CD14-positive monocyte (primary cell): ENCODE measurements at regions of chr19 and their contacts with region 1.

Region 1: DNA sequence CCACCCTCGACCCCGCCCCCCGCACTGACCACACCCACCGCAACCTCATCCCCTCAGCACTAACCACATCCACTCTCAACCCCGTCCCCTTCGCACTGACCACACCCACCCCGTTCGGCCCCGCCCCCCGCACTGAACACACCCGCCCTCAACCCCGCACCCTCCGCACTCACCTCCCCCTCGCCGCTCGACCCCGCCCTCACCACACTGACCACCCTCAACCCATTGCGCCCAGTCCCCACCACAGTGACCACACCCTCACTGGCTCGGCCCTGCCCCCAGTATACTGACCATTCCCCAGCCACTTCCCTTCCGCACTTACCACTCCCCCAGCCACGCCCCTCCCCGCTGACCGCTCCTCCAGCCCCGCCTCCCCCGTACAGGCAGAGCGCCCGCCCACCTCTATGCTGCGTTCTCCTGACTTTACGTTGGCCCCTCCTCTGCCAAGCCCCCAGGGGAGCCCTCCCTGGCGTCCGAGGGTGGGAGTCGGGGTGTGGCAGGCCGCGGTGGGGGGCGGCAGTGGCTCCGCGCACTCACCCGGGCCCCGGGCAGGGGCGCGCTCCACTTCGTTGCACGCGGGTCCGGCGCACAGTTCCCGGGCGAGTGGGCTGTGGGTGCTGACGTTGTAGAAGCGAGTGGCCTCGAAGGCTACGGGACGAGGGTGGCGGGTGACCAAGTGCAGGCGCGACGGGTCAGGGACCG is 8.5 kb downstream of the F2RL3 start:
- DNase-seq: peak; percentile 91 to 97 (median 97)
- H3K4me3 ChIP-seq: peak overlapping the region; percentile 36 to 76 (median 56)
- H3K4me3 Mint-ChIP-seq: peak overlapping the region; percentile 66 to 71
- H3K27ac ChIP-seq: peak overlapping the region; percentile 46 to 79
- H3K27ac Mint-ChIP-seq: peak overlapping the region in 6 of 7 donors; percentile 68 to 97 (median 84)
- H3K4me1 ChIP-seq: peaks cover 64 to 68% of the 10 kb centered on the region in 2 donors
- H3K4me1 Mint-ChIP-seq: peaks cover 52% of the 10 kb centered on the region
- H3K27me3 ChIP-seq: peaks cover 0 to 32% of the 10 kb centered on the region in 2 donors
- H3K27me3 Mint-ChIP-seq: peaks cover 28 to 53% (median 46%) of the 10 kb centered on the region in 3 donors
- CTCF ChIP-seq: no peak

Region 2: GRCh38 chr19:16829010-16829821 is 68.1 kb before region 1 on chr19 and contains the start of gene SIN3B:
- intact Hi-C with region 1: loop called (anchors 5 kb)
- DNase-seq: peak; percentile 87 to 91 (median 89)
- H3K4me3 ChIP-seq: peak within 1 kb of the TSS; percentile 52 to 97 (median 91)
- H3K4me3 Mint-ChIP-seq: peak within 1 kb of the TSS; percentile 87 to 91
- H3K27ac ChIP-seq: peak within 1 kb of the TSS in 1 of 2 donors; percentile 85
- H3K27ac Mint-ChIP-seq: peak within 1 kb of the TSS; percentile 78 to 93 (median 88)
- H3K4me1 ChIP-seq: peaks cover 59 to 63% of the 10 kb centered on the region in 2 donors
- H3K4me1 Mint-ChIP-seq: peaks cover 66% of the 10 kb centered on the region
- H3K27me3 ChIP-seq: peaks cover 0 to 3% of the 10 kb centered on the region in 2 donors
- H3K27me3 Mint-ChIP-seq: peaks cover 9 to 16% (median 14%) of the 10 kb centered on the region in 3 donors
- CTCF ChIP-seq: no peak
- polyA plus RNA-seq, gene SIN3B: 7.2 to 154 (median 10.2) TPM

Region 3: GRCh38 chr19:16920758-16921210 is 23.5 kb after region 1 on chr19:
- intact Hi-C with region 1: no loop called
- DNase-seq: no peak
- H3K4me3 ChIP-seq: no peak overlapping the region
- H3K4me3 Mint-ChIP-seq: no peak overlapping the region
- H3K27ac ChIP-seq: no peak overlapping the region
- H3K27ac Mint-ChIP-seq: no peak overlapping the region
- H3K4me1 ChIP-seq: no peaks in the 10 kb centered on the region
- H3K4me1 Mint-ChIP-seq: no peaks in the 10 kb centered on the region
- H3K27me3 ChIP-seq: no peaks in the 10 kb centered on the region
- H3K27me3 Mint-ChIP-seq: peaks cover 11 to 15% (median 12%) of the 10 kb centered on the region in 3 donors
- CTCF ChIP-seq: no peak